ENCODE measurements at regions of chr10 and their contacts with region 1.

Region 1: DNA sequence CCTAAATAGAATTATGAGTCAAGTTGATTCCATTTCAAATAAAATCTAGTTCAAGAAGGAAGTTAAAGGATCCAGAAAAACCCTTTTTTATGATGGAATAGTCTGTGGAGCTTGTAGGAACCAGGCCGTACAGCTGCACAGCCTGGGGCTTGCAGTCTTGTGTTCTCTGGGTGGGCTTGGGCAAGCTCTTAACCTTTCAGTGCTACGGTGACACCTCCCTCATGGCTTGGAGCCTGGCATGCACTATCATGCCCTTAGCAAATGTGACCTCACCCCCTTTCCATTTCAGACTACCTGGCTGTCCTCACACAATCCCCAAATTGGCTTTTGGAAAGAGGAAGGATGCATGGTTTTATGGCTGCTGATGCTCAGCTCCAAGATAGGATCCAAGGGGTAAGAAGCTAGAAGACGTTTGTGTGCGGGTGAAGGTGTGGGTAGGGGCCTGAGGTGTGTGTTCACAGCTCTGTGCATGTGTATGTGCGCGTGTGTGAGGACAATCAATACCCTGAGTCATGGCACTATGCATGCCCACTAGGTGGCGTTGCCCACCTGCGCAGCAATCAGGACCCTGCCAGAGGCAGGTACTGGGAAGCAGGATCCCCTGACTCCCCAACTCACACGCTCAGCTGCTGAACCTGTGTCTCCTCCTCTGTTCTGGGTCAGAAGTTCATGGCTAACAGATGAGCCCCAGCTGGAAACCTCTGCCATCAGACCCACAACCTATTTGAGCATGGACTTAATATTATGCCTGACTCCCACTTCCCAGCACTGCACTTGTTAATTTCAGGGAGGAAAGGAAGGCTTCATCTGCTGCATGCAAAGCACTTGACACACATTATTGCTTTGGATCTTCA is 113.4 kb downstream of the PTPN20 start:
- DNase-seq: peak; percentile 70 to 83 (median 78)
- H3K4me3 ChIP-seq: no peak overlapping the region
- H3K27ac ChIP-seq: no peak overlapping the region
- H3K4me1 ChIP-seq: no peaks in the 10 kb centered on the region
- H3K27me3 ChIP-seq: no peaks in the 10 kb centered on the region
- CTCF ChIP-seq: peak; percentile 72

Region 2: DNA sequence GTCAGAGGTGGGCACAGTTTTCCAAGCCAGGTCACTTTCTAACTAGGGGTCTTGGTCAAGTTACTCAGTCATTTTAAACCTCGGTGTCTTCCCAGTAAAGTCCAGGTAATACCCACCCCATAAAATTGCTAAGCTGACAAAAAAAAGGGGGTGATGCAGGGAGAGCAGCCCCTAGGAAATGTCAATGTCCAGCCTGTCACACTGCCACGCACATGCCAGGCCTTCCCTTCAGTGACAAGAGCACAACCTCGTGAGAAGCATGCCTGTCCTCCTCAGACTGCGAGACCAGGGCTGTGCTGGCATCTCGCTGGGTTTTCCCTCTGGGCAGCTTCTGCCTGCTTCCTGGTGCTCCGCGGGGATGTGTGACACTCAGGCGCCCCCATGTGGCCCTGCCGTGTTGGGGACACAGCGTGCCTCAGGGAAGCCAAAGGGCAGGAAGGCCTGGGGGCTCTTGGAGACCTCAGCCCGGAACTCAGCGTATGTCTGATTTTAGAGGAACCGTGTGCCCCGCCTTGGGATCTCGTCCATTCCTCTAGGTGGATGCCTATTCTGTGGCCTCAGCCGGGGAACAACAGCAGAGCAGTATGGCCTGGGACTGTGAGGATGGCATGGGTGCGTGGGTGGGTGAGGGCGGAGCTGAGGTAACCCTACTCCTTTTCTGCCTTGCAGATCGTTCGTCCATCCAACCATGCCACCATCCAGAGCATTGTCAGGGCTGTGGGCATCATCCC is 287.5 kb after region 1 on chr10:
- intact Hi-C with region 1: loop called (anchors 10 kb)
- DNase-seq: peak; percentile 82 to 91 (median 86)
- H3K4me3 ChIP-seq: no peak overlapping the region
- H3K27ac ChIP-seq: no peak overlapping the region
- H3K4me1 ChIP-seq: no peaks in the 10 kb centered on the region
- H3K27me3 ChIP-seq: no peaks in the 10 kb centered on the region
- CTCF ChIP-seq: peak; percentile 90